ENCODE measurements at regions of chr15 and their contacts with region 1.

Region 1: DNA sequence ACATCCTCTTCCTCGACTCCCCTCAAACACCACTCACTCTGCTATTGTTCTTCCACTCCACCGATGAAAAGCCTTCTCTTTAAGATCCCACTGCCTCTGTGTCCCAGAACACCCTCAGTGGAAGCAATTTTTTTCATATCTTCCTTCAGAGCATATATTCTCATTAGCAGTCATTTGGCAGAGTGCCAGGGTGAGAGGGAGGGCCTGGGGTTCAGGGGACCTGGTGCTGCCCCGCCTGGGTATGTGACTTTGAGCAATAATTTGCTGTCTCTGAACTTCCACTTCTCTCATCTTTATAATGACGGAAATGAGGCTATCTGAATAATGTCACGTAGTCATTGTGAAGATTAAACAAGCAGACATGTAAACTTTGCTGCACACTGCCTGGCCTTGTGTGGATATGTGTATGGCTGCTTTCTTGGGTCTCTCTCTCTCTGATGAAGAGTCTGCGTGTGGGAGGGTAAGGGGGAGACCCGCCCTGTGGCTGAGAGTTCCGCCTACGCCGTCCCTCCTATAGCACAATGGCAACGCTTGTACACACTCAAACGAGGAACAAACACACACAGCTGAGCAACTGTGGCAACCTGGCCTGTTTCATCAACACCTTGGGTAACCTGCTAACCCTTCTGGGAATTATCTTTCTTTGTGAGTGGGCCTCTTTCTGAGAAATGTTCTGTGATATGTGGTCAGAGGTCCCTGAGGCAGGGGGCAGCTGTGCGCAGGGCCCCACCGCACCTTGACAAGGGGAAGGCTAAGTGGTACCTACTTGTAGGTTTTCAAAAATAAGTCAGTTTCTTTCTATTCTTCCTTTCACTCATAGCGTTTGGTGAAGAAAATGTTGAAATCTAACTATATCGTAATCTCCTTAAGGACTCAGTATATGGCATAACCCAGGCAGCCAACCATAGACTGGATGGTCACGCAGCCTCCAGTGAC is 369.8 kb downstream of the SV2B start:
- DNase-seq: peak; percentile 93
- H3K4me3 Mint-ChIP-seq: peak overlapping the region; percentile 0
- H3K27ac Mint-ChIP-seq: peak overlapping the region; percentile 82
- H3K4me1 Mint-ChIP-seq: peaks cover 50% of the 10 kb centered on the region
- H3K27me3 Mint-ChIP-seq: no peaks in the 10 kb centered on the region

Region 2: GRCh38 chr15:91320101-91320500 is 149.8 kb before region 1 on chr15:
- CTCF ChIA-PET with region 1: no interaction called
- intact Hi-C with region 1: loop called (anchors 2 kb)
- DNase-seq: peak; percentile 18
- H3K4me3 Mint-ChIP-seq: no peak overlapping the region
- H3K27ac Mint-ChIP-seq: no peak overlapping the region
- H3K4me1 Mint-ChIP-seq: peaks cover 38% of the 10 kb centered on the region
- H3K27me3 Mint-ChIP-seq: no peaks in the 10 kb centered on the region

Region 3: GRCh38 chr15:91426412-91426811 is 43.5 kb before region 1 on chr15:
- CTCF ChIA-PET with region 1: no interaction called
- intact Hi-C with region 1: loop called (anchors 1 kb)
- DNase-seq: peak; percentile 71
- H3K4me3 Mint-ChIP-seq: no peak overlapping the region
- H3K27ac Mint-ChIP-seq: peak overlapping the region; percentile 42
- H3K4me1 Mint-ChIP-seq: peaks cover 35% of the 10 kb centered on the region
- H3K27me3 Mint-ChIP-seq: no peaks in the 10 kb centered on the region

Region 4: GRCh38 chr15:91456251-91456738 is 13.6 kb before region 1 on chr15:
- CTCF ChIA-PET with region 1: no interaction called
- intact Hi-C with region 1: loop called (anchors 2 kb)
- DNase-seq: no peak
- H3K4me3 Mint-ChIP-seq: no peak overlapping the region
- H3K27ac Mint-ChIP-seq: no peak overlapping the region
- H3K4me1 Mint-ChIP-seq: peaks cover 23% of the 10 kb centered on the region
- H3K27me3 Mint-ChIP-seq: no peaks in the 10 kb centered on the region

Region 5: GRCh38 chr15:91496647-91497354 is 26.9 kb after region 1 on chr15:
- CTCF ChIA-PET with region 1: no interaction called
- intact Hi-C with region 1: no loop called
- DNase-seq: no peak
- H3K4me3 Mint-ChIP-seq: no peak overlapping the region
- H3K27ac Mint-ChIP-seq: no peak overlapping the region
- H3K4me1 Mint-ChIP-seq: no peaks in the 10 kb centered on the region
- H3K27me3 Mint-ChIP-seq: no peaks in the 10 kb centered on the region

Region 6: GRCh38 chr15:91522663-91523332 is 52.9 kb after region 1 on chr15:
- CTCF ChIA-PET with region 1: no interaction called
- intact Hi-C with region 1: loop called (anchors 2 kb)
- DNase-seq: peak; percentile 17
- H3K4me3 Mint-ChIP-seq: no peak overlapping the region
- H3K27ac Mint-ChIP-seq: no peak overlapping the region
- H3K4me1 Mint-ChIP-seq: peaks cover 24% of the 10 kb centered on the region
- H3K27me3 Mint-ChIP-seq: no peaks in the 10 kb centered on the region

Region 7: DNA sequence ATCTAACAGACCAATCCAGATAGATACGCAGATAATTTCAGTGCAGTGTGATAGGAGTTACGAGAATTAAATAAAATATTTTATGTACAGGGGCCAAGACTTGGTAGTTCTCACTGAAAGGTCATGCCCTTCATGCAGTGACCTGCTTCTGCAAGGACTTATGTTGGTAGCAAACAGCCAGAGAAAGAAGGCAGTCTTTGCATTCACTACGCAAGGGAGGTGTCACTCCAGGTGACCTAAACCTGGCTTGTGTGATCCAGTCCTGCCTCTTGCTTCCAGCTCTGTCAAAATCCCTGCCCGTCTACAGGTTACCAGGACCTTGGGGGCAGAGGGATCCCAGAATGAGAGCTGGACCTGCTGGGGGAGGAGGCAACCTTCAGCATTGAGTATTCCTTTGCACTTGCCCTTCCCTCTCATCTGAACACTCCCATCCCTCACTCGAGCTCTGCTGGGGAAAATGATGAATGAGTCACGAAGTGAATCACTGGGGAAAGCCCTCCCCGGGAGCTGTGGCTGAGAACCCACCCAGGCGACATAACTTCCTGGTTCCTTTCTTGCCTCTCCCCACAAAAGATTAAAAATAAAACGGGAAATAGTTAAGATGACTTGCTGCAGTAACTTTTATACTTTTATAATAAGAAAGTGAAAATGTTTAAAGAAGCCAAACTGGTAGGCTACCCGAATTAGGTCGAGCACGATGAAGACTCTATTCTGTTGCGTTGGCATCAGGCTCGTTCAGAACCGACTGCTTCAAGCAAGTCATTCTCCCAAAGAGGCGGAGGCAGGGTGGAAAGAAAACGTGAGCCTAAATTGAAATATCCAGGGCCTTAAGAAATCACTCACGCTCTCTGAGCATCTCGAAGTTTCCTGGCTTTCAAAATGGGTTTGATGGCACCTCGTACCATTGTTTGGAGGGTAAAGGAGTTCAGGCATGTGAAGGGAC is 599.7 kb after region 1 on chr15:
- CTCF ChIA-PET with region 1: no interaction called
- intact Hi-C with region 1: loop called (anchors 5 kb)
- DNase-seq: peak; percentile 78
- H3K4me3 Mint-ChIP-seq: peak overlapping the region; percentile 52
- H3K27ac Mint-ChIP-seq: peak overlapping the region; percentile 73
- H3K4me1 Mint-ChIP-seq: peaks cover 47% of the 10 kb centered on the region
- H3K27me3 Mint-ChIP-seq: no peaks in the 10 kb centered on the region

Measured in activated naive CD4-positive, alpha-beta T cell treated with anti-CD3 and anti-CD28 coated beads for 36 hours (primary cell).